OCI-LY7 (cell line): ENCODE measurements at regions of chr12 and their contacts with region 1.

Region 1: GRCh38 chr12:49707128-49707811 is at the start of gene FMNL3:
- DNase-seq: peak; percentile 98
- H3K4me3 ChIP-seq: peak within 1 kb of the TSS; percentile 90
- H3K27ac ChIP-seq: peak within 1 kb of the TSS; percentile 50
- H3K4me1 ChIP-seq: peaks cover 40% of the 10 kb centered on the region
- CTCF ChIP-seq: peak; percentile 97
- total RNA-seq, gene FMNL3: 28.7 and 29.6 TPM in 2 replicates

Region 2: GRCh38 chr12:49636979-49637755 is 70.1 kb before region 1 on chr12:
- CTCF ChIA-PET with region 1: no interaction called
- POLR2A ChIA-PET with region 1: interaction called, 6 read pairs
- intact Hi-C with region 1: loop called (anchors 2 kb)
- DNase-seq: peak; percentile 84
- H3K4me3 ChIP-seq: no peak overlapping the region
- H3K27ac ChIP-seq: no peak overlapping the region
- H3K4me1 ChIP-seq: peaks cover 14% of the 10 kb centered on the region
- CTCF ChIP-seq: peak; percentile 85

Region 3: DNA sequence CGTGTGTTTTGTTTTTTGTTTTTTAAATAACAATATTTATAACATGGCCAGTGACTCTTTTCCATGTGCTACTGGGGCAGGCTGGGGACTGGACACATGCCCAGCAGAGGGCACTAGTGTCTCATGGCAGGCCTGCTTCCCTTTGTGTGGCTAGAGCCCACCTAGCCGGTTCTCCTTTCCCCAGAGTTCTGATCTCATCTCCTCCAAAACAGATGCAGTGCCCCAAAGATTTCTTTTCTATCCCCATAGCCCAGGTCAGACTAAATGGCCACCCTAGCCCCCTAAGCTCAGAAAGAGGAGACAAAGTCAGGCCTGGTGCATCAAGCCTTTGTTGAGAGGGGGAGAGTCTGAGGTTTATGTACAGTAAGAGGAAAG is 62.7 kb before region 1 on chr12:
- CTCF ChIA-PET with region 1: interaction called, 14 read pairs
- POLR2A ChIA-PET with region 1: interaction called, 18 read pairs
- intact Hi-C with region 1: loop called (anchors 1 kb)
- DNase-seq: peak; percentile 88
- H3K4me3 ChIP-seq: no peak overlapping the region
- H3K27ac ChIP-seq: peak overlapping the region; percentile 19
- H3K4me1 ChIP-seq: peaks cover 17% of the 10 kb centered on the region
- CTCF ChIP-seq: peak; percentile 99

Region 4: GRCh38 chr12:49655595-49656236 is 51.6 kb before region 1 on chr12:
- CTCF ChIA-PET with region 1: interaction called, 3 read pairs
- POLR2A ChIA-PET with region 1: interaction called, 14 read pairs
- intact Hi-C with region 1: no loop called
- DNase-seq: no peak
- H3K4me3 ChIP-seq: no peak overlapping the region
- H3K27ac ChIP-seq: no peak overlapping the region
- H3K4me1 ChIP-seq: peaks cover 15% of the 10 kb centered on the region
- CTCF ChIP-seq: no peak

Region 5: GRCh38 chr12:49662998-49663843 is 44.0 kb before region 1 on chr12:
- CTCF ChIA-PET with region 1: interaction called, 11 read pairs
- POLR2A ChIA-PET with region 1: interaction called, 12 read pairs
- intact Hi-C with region 1: loop called (anchors 1 kb)
- DNase-seq: peak; percentile 94
- H3K4me3 ChIP-seq: peak overlapping the region; percentile 60
- H3K27ac ChIP-seq: peak overlapping the region; percentile 86
- H3K4me1 ChIP-seq: peaks cover 75% of the 10 kb centered on the region
- CTCF ChIP-seq: no peak